Psoas muscle (tissue), 8 donors: ENCODE measurements at regions of chr3 and their contacts with region 1.

Region 1: DNA sequence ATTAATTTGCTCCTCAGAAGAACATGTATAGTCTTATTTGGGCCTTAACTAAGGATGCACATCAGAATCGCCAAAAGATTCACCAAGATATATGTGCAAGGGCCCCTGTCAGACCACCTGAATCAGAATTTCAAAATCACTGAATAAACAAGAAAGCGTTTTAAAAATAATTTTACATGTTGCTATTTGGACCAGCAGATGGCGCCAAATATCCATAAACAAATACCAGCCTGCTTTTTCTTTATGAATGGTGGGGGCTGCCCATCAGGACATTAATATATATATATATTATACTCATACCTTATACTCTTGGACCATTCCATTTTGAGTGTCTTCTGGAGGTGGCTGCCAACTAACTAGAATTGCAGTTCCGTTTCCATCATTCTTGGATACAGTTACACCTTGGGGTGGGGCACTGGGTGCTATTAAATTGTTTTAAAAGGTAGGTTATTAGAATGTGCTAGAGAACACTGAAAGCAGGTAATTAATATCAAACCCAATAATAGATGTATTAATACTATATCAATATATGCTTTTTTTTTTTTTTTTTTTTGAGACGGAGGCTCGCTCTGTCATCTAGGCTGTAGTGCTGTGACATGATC is 1108.3 kb downstream of the ROBO1 start:
- DNase-seq: no peak
- ATAC-seq: peak in 1 of 4 donors; percentile 49
- H3K4me3 ChIP-seq: no peak overlapping the region
- H3K27ac ChIP-seq: no peak overlapping the region
- H3K4me1 ChIP-seq: no peaks in the 10 kb centered on the region
- H3K27me3 ChIP-seq: no peaks in the 10 kb centered on the region
- CTCF ChIP-seq: peak; percentile 71

Region 2: GRCh38 chr3:78614486-78614885 is 45.0 kb before region 1 on chr3:
- intact Hi-C with region 1: no loop called
- DNase-seq: no peak
- ATAC-seq: no peak
- H3K4me3 ChIP-seq: no peak overlapping the region
- H3K27ac ChIP-seq: no peak overlapping the region
- H3K4me1 ChIP-seq: no peaks in the 10 kb centered on the region
- H3K27me3 ChIP-seq: no peaks in the 10 kb centered on the region
- CTCF ChIP-seq: no peak

Region 3: GRCh38 chr3:78645628-78646310 is 13.7 kb before region 1 on chr3:
- intact Hi-C with region 1: no loop called
- DNase-seq: no peak
- ATAC-seq: peak in 3 of 4 donors; percentile 27 to 84 (median 62)
- H3K4me3 ChIP-seq: no peak overlapping the region
- H3K27ac ChIP-seq: no peak overlapping the region
- H3K4me1 ChIP-seq: no peaks in the 10 kb centered on the region
- H3K27me3 ChIP-seq: no peaks in the 10 kb centered on the region
- CTCF ChIP-seq: peak; percentile 89

Region 4: GRCh38 chr3:79032686-79033318 is 373.3 kb after region 1 on chr3:
- intact Hi-C with region 1: loop called (anchors 2 kb)
- DNase-seq: no peak
- ATAC-seq: peak in 3 of 4 donors; percentile 30 to 82 (median 60)
- H3K4me3 ChIP-seq: no peak overlapping the region
- H3K27ac ChIP-seq: no peak overlapping the region
- H3K4me1 ChIP-seq: no peaks in the 10 kb centered on the region
- H3K27me3 ChIP-seq: no peaks in the 10 kb centered on the region
- CTCF ChIP-seq: peak; percentile 73

Region 5: GRCh38 chr3:79361748-79362378 is 702.4 kb after region 1 on chr3:
- intact Hi-C with region 1: loop called in 1 of 2 experiments (anchors 5 kb)
- DNase-seq: no peak
- ATAC-seq: peak in 1 of 4 donors; percentile 36
- H3K4me3 ChIP-seq: no peak overlapping the region
- H3K27ac ChIP-seq: no peak overlapping the region
- H3K4me1 ChIP-seq: no peaks in the 10 kb centered on the region
- H3K27me3 ChIP-seq: no peaks in the 10 kb centered on the region
- CTCF ChIP-seq: peak; percentile 64